IMR-90 (cell line): ENCODE measurements at regions of chr10 and their contacts with region 1.

Region 1: GRCh38 chr10:49562893-49563292 is 24.0 kb upstream of the ERCC6 start:
- DNase-seq: peak; percentile 40
- ATAC-seq: no peak
- H3K4me3 ChIP-seq: no peak overlapping the region
- H3K27ac ChIP-seq: no peak overlapping the region
- H3K4me1 ChIP-seq: no peaks in the 10 kb centered on the region; the same call in 1 of the 2 replicates
- H3K27me3 ChIP-seq: no peaks in the 10 kb centered on the region; the same call in 1 of the 2 replicates
- CTCF ChIP-seq: no peak
- POLR2A ChIP-seq: no peak
- RAD21 ChIP-seq: no peak

Region 2: DNA sequence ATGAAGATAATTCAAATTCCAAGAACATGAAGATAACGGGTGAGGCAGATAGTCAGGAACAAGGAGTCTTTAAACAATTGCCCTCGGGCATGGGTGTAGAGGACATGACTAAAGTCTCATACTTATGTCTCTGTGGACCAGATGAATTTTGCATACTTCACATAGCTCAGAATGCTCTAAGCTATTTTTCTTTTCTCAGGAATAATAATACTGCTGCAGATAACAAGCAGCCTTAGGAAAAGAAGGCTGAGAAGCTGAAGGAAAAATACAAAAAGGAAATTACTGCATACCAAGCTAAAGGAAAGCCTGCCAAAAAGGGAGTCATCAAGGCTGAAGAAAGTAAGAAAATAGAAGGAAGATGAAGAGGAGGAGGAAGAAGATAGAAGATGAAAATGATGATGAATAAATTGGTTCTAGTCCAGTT is 10.6 kb before region 1 on chr10:
- CTCF ChIA-PET with region 1: interaction called, 13 read pairs
- POLR2A ChIA-PET with region 1: no interaction called
- dilution Hi-C with region 1: no loop called
- in situ Hi-C with region 1: no loop called
- intact Hi-C with region 1: no loop called
- DNase-seq: peak; percentile 81
- ATAC-seq: peak; percentile 89
- H3K4me3 ChIP-seq: no peak overlapping the region
- H3K27ac ChIP-seq: no peak overlapping the region
- H3K4me1 ChIP-seq: peaks cover 7% of the 10 kb centered on the region; the same call in 1 of the 2 replicates
- H3K27me3 ChIP-seq: no peaks in the 10 kb centered on the region
- CTCF ChIP-seq: no peak
- POLR2A ChIP-seq: no peak
- RAD21 ChIP-seq: no peak